ENCODE measurements at regions of chr1 and their contacts with region 1.

Region 1: GRCh38 chr1:30719406-30720270 is 3.7 kb downstream of the MATN1 start:
- DNase-seq: no peak
- H3K4me3 ChIP-seq: peak overlapping the region; percentile 78
- H3K27ac ChIP-seq: peak overlapping the region; percentile 98
- H3K4me1 ChIP-seq: peaks cover 10% of the 10 kb centered on the region
- H3K27me3 ChIP-seq: no peaks in the 10 kb centered on the region
- CTCF ChIP-seq: no peak

Region 2: DNA sequence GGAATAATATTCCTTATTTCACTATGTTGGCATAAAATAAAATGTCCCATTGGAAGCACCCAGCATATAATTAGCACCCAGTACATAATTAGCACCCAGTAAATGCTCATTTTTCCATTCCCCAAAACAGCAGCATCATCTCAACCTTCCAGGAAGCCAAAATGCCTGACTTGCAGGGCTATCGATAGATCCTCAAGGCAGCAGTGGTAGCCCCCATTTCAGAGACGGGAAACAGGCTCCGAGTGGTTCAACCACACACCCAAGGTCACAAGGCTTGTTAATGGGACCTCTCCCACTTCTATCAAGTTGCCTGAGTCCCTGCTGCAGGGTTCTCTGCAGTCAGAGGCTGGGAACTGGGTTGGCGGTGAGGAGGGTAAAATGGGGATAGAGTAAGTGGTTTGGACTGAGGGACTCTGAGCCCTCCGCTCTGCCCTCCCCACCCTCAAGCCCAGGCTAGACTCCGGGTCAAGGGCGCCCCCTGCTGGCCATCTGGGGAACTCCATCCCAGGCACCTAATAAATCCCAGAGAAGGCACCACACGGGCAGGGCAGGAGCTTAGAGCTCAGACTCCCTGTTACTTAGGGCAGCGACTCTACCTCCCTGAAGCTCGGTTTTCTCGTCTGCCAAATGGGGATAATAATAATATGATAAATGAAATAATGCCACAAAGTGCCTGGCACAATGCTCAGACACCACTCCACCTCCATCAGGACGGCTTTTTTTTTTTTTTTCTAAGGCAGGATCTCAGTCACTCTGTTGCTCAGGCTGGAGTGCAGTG is 59.8 kb after region 1 on chr1:
- intact Hi-C with region 1: loop called (anchors 2 kb)
- DNase-seq: peak; percentile 79
- H3K4me3 ChIP-seq: no peak overlapping the region
- H3K27ac ChIP-seq: no peak overlapping the region
- H3K4me1 ChIP-seq: peaks cover 9% of the 10 kb centered on the region
- H3K27me3 ChIP-seq: peaks cover 12% of the 10 kb centered on the region
- CTCF ChIP-seq: peak; percentile 97

Region 3: DNA sequence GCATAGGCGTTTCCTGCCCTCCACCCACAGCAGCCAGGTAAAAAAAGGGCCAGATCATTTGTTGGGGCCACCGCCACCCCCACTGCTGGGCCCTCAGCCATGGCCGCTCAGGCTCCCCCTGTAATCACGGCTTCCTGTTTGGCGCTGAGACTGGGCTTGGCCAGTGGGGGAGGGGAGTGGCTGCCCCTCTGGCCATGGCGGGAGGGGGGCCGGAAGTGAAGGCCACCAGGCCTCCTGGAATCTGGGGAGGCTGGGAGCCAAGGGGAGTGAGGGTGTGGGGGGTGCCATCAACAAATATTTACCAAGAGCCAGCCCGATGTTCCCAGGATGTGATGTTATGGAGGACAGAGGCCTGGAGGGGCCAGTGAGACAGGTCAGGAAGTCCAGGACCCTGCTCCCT is 182.5 kb after region 1 on chr1:
- intact Hi-C with region 1: no loop called
- DNase-seq: peak; percentile 54
- H3K4me3 ChIP-seq: no peak overlapping the region
- H3K27ac ChIP-seq: peak overlapping the region; percentile 73
- H3K4me1 ChIP-seq: peaks cover 44% of the 10 kb centered on the region
- H3K27me3 ChIP-seq: no peaks in the 10 kb centered on the region
- CTCF ChIP-seq: no peak